ENCODE measurements at regions of chr11 and their contacts with region 1.

Region 1: DNA sequence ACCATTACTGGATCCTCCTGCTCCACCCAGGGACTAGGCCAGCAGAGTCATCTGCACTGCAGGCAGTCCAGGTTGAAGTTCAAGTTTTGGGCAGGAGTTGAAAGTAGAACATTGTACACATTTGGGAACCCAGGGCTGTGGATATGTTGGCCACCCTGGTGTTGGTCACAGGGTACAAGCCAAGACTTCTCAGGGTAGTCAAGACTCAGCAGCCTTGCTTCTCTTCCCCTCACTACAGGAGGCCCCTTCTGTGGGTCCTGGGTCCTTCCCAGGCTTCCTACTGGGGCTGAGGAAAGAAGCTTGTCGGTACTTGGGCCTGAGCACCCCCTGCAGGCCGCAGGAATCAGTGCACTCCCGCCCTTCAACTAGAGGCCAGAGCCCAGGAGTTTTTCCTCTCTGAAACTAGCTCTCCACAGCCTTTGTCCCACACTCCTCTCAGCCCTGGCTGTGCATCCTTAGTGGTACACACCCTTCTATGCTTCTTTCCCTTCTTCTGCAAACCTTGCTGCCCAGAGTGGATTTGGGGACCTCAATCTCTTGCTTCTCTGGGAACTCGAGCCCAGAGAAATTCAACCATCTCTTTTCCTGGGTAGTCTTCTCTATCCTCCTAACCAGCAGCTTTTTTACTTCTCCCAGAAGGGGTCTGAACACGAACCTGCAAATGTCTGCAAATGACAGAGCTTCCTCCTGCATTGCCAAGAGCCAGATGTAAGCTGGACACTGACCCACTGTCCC is 2.6 kb upstream of the HPX start:
- DNase-seq: peak; percentile 36 to 57
- ATAC-seq: peak; percentile 56 to 83; a peak in 5 of 6 replicates
- H3K4me3 ChIP-seq: no peak overlapping the region
- H3K27ac ChIP-seq: no peak overlapping the region
- H3K4me1 ChIP-seq: peaks cover 13% of the 10 kb centered on the region
- CTCF ChIP-seq: peak; percentile 64
- EP300 ChIP-seq: no peak
- POLR2A ChIP-seq: no peak
- RAD21 ChIP-seq: peak; percentile 73 to 75

Region 2: DNA sequence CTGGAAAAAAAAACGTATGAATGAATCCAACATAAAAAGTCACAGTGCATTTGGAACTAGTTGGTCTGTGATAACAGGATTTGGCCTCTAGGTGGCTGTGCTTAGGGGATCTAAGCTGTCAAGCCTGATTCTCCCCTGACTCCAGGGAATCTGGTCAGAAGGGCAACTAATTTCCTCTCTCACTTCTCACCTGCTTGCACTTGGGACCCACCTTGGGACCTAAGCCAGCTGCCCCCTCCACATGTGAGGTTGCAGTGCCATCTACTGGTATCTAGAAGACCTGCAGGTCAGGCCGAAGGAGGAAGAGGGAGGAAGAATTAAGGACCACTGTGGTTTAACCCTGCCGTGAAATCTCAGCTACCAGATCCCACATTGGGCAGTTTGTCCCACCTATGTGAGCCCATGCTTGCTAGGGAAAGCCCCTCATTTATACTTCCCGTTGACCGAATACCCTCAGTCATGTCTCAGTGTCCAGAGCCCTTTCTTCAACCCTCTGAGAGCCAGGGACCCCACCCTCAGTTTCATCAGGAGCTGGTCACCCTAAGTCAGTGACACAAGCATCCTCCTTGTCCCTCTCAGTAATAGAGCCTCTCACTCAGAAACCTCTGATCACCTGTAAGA is 90.0 kb before region 1 on chr11:
- CTCF ChIA-PET with region 1: no interaction called
- POLR2A ChIA-PET with region 1: no interaction called
- DNase-seq: peak; percentile 46 to 79
- ATAC-seq: peak; percentile 56 to 86; a peak in 5 of 6 replicates
- H3K4me3 ChIP-seq: no peak overlapping the region
- H3K27ac ChIP-seq: 0 out of 6 replicates have a peak overlapping the region, but pooled peaks of 1 of the 2 experiments have one; percentile 28
- H3K4me1 ChIP-seq: peaks cover 22% of the 10 kb centered on the region
- CTCF ChIP-seq: peak; percentile 96
- EP300 ChIP-seq: no peak
- POLR2A ChIP-seq: no peak
- RAD21 ChIP-seq: peak; percentile 92 to 95

Region 3: GRCh38 chr11:6411594-6412031 is 31.8 kb before region 1 on chr11:
- CTCF ChIA-PET with region 1: interaction called, 10 read pairs
- POLR2A ChIA-PET with region 1: no interaction called
- DNase-seq: no peak
- ATAC-seq: no peak
- H3K4me3 ChIP-seq: no peak overlapping the region
- H3K27ac ChIP-seq: no peak overlapping the region
- H3K4me1 ChIP-seq: no peaks in the 10 kb centered on the region
- CTCF ChIP-seq: no peak
- EP300 ChIP-seq: no peak
- POLR2A ChIP-seq: no peak
- RAD21 ChIP-seq: no peak

Region 4: GRCh38 chr11:6431861-6432260 is 11.6 kb before region 1 on chr11:
- CTCF ChIA-PET with region 1: interaction called, 26 read pairs
- POLR2A ChIA-PET with region 1: no interaction called
- DNase-seq: peak; percentile 48
- ATAC-seq: peak; percentile 79 to 87
- H3K4me3 ChIP-seq: no peak overlapping the region
- H3K27ac ChIP-seq: peak overlapping the region in 1 of 2 experiments; percentile 9; a peak in 2 of 6 replicates
- H3K4me1 ChIP-seq: peaks cover 18% of the 10 kb centered on the region
- CTCF ChIP-seq: no peak
- EP300 ChIP-seq: no peak
- POLR2A ChIP-seq: no peak
- RAD21 ChIP-seq: no peak

Measured in A549 (cell line).